Heart left ventricle (tissue), 16 donors: ENCODE measurements at regions of chr11 and their contacts with region 1.

Region 1: GRCh38 chr11:82867495-82868082 is 32.6 kb downstream of the PRCP start:
- DNase-seq: peak in 4 of 5 donors; percentile 58 to 84 (median 74)
- ATAC-seq: peak in 3 of 4 donors; percentile 54 to 62 (median 55)
- H3K4me3 ChIP-seq: peak overlapping the region in 7 of 12 donors; percentile 7 to 38 (median 31)
- H3K27ac ChIP-seq: no peak overlapping the region
- H3K4me1 ChIP-seq: peaks cover 0 to 48% (median 21%) of the 10 kb centered on the region in 12 donors
- H3K27me3 ChIP-seq: no peaks in the 10 kb centered on the region
- CTCF ChIP-seq: peak; percentile 60 to 84 (median 76)
- POLR2A ChIP-seq: no peak

Region 2: DNA sequence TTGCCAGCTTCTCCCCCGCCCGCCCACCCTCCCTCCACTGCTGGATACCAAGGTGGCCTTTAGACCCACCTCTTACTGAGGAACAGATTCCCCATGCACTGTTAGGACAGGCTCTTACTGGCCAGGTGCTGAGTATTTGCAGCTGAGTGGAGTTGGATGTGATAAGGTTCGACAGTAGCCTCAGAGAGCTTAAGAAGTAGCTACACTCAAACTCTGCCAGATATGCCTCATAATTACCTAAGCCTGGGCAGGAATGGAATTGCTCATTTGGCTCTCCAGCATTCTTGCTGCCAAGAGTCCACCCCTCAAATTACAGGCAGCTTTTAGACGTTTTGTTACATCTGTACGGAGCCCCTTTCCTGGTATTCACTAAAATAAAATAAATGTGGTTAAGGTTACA is 143.6 kb before region 1 on chr11:
- intact Hi-C with region 1: loop called in 8 of 10 experiments (anchors 2 to 10 kb)
- DNase-seq: no peak
- ATAC-seq: no peak
- H3K4me3 ChIP-seq: no peak overlapping the region
- H3K27ac ChIP-seq: no peak overlapping the region
- H3K4me1 ChIP-seq: peaks cover 0 to 9% (median 0%) of the 10 kb centered on the region in 12 donors
- H3K27me3 ChIP-seq: peaks cover 0 to 8% (median 0%) of the 10 kb centered on the region in 9 donors
- CTCF ChIP-seq: no peak
- POLR2A ChIP-seq: no peak

Region 3: DNA sequence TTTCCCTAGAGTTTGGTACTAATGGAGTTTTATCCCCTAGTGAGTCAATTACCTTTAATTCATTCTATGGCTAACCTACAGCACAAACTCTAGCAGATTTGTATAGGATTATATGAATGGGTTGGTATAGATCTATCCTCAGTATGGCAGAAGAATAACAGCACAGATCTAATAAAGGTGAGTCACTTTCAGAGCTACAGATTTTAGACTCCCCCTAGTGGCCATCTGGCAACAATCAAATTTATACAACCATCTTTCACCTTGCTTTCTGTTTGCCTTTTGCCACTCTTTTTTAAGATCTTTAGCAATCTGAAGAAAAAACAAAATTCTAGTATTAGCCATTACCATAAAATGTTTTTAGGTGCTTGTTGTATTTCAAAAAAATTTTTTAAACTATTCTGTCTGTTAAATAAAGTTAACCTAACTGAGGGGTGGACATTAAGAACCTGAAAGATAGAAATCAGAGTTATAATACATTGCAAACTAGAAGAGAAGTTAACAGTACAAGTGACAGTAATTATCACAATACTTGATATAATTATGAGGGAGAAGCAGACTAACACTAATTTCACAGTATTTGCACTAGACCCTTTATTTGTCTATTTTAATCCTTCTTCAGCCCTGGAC is 59.8 kb after region 1 on chr11:
- intact Hi-C with region 1: loop called in 2 of 10 experiments (anchors 5 to 10 kb)
- DNase-seq: no peak
- ATAC-seq: peak in 2 of 4 donors; percentile 41 to 64
- H3K4me3 ChIP-seq: no peak overlapping the region
- H3K27ac ChIP-seq: no peak overlapping the region
- H3K4me1 ChIP-seq: peaks cover 0 to 12% (median 0%) of the 10 kb centered on the region in 12 donors
- H3K27me3 ChIP-seq: no peaks in the 10 kb centered on the region
- CTCF ChIP-seq: peak; percentile 69 to 90 (median 86)
- POLR2A ChIP-seq: no peak

Region 4: DNA sequence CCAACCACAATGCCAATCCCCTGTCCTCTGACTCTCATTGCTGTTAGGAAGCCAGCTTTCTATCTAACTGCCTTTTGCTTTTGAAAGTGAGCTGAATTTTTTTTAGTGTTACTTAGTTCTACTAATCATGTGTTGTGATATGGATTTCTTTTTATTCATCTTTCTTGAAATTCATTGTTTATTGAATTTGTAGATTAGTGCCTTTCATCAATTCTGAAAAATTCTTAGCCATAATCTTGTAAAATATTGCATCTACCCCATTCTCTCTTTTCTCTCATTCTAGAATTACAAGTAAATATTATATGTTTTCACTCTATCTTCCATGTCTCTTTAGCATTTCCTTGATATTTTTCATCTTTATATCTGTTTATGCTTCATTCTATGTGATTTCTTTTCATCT is 81.8 kb after region 1 on chr11:
- intact Hi-C with region 1: no loop called
- DNase-seq: no peak
- ATAC-seq: no peak
- H3K4me3 ChIP-seq: no peak overlapping the region
- H3K27ac ChIP-seq: no peak overlapping the region
- H3K4me1 ChIP-seq: no peaks in the 10 kb centered on the region
- H3K27me3 ChIP-seq: no peaks in the 10 kb centered on the region
- CTCF ChIP-seq: no peak
- POLR2A ChIP-seq: no peak

Region 5: GRCh38 chr11:82978422-82979099 is 111.0 kb after region 1 on chr11:
- intact Hi-C with region 1: no loop called
- DNase-seq: no peak
- ATAC-seq: no peak
- H3K4me3 ChIP-seq: no peak overlapping the region
- H3K27ac ChIP-seq: no peak overlapping the region
- H3K4me1 ChIP-seq: peaks cover 0 to 24% (median 6%) of the 10 kb centered on the region in 12 donors
- H3K27me3 ChIP-seq: no peaks in the 10 kb centered on the region
- CTCF ChIP-seq: no peak
- POLR2A ChIP-seq: no peak

Region 6: DNA sequence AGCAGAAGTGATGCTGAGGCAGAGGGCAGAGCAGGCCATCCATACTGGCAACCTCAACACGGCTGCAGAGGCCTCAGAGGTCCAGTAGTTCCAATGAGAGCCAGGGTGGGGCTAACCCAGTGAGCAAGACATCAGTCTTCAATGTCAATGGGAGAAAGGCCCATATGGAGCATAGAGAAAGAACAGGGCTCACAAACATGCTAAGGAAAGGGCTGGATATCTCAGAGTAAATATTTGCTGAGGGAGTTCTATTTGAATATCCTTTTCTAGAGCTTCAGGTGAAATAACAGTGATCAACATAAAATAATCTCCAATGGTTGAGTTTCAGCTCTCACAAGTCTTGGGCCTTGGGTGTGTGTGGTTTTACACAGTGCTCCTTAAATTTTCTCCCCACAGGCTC is 469.4 kb after region 1 on chr11:
- intact Hi-C with region 1: no loop called
- DNase-seq: no peak
- ATAC-seq: no peak
- H3K4me3 ChIP-seq: no peak overlapping the region
- H3K27ac ChIP-seq: no peak overlapping the region
- H3K4me1 ChIP-seq: no peaks in the 10 kb centered on the region
- H3K27me3 ChIP-seq: no peaks in the 10 kb centered on the region
- CTCF ChIP-seq: no peak
- POLR2A ChIP-seq: no peak